ENCODE measurements at regions of chr1 and their contacts with region 1.

Region 1: GRCh38 chr1:53278201-53278725 is 39.9 kb upstream of the MAGOH start:
- DNase-seq: peak; percentile 40 to 82 (median 70)
- ATAC-seq: peak; percentile 74
- H3K4me3 ChIP-seq: no peak overlapping the region
- H3K4me3 Mint-ChIP-seq: no peak overlapping the region
- H3K27ac ChIP-seq: no peak overlapping the region
- H3K27ac Mint-ChIP-seq: no peak overlapping the region
- H3K4me1 ChIP-seq: no peaks in the 10 kb centered on the region
- H3K4me1 Mint-ChIP-seq: no peaks in the 10 kb centered on the region
- H3K27me3 ChIP-seq: no peaks in the 10 kb centered on the region
- H3K27me3 Mint-ChIP-seq: no peaks in the 10 kb centered on the region
- CTCF ChIP-seq: peak; percentile 97

Region 2: GRCh38 chr1:53214376-53214940 is 63.8 kb before region 1 on chr1:
- CTCF ChIA-PET with region 1: no interaction called
- POLR2A ChIA-PET with region 1: no interaction called
- intact Hi-C with region 1: no loop called
- DNase-seq: no peak
- ATAC-seq: no peak
- H3K4me3 ChIP-seq: no peak overlapping the region
- H3K4me3 Mint-ChIP-seq: no peak overlapping the region
- H3K27ac ChIP-seq: no peak overlapping the region
- H3K27ac Mint-ChIP-seq: no peak overlapping the region
- H3K4me1 ChIP-seq: peaks cover 3% of the 10 kb centered on the region
- H3K4me1 Mint-ChIP-seq: peaks cover 16% of the 10 kb centered on the region
- H3K27me3 ChIP-seq: no peaks in the 10 kb centered on the region
- H3K27me3 Mint-ChIP-seq: no peaks in the 10 kb centered on the region
- CTCF ChIP-seq: no peak

Region 3: DNA sequence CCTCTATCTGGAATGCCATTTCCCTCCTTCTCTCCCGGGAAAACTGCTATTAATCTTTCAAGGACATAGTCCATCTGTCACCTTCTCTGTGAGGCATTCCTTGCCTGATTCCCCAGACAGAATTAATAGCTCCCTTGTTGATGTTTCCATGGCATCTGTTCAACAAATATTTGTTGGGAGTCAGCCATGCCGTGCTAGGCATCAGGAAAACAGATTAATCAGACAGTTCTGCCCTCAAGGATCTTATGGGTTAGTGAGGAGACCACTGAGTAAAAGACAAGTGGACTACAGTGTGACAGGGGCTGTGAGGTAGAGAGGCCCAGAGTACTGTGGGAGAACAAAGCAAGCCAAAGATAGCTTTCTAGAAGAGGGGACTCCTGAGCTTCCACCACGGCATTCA is 28.6 kb before region 1 on chr1:
- CTCF ChIA-PET with region 1: no interaction called
- POLR2A ChIA-PET with region 1: no interaction called
- intact Hi-C with region 1: no loop called
- DNase-seq: no peak
- ATAC-seq: no peak
- H3K4me3 ChIP-seq: no peak overlapping the region
- H3K4me3 Mint-ChIP-seq: no peak overlapping the region
- H3K27ac ChIP-seq: no peak overlapping the region
- H3K27ac Mint-ChIP-seq: no peak overlapping the region
- H3K4me1 ChIP-seq: no peaks in the 10 kb centered on the region
- H3K4me1 Mint-ChIP-seq: no peaks in the 10 kb centered on the region
- H3K27me3 ChIP-seq: no peaks in the 10 kb centered on the region
- H3K27me3 Mint-ChIP-seq: no peaks in the 10 kb centered on the region
- CTCF ChIP-seq: no peak

Region 4: DNA sequence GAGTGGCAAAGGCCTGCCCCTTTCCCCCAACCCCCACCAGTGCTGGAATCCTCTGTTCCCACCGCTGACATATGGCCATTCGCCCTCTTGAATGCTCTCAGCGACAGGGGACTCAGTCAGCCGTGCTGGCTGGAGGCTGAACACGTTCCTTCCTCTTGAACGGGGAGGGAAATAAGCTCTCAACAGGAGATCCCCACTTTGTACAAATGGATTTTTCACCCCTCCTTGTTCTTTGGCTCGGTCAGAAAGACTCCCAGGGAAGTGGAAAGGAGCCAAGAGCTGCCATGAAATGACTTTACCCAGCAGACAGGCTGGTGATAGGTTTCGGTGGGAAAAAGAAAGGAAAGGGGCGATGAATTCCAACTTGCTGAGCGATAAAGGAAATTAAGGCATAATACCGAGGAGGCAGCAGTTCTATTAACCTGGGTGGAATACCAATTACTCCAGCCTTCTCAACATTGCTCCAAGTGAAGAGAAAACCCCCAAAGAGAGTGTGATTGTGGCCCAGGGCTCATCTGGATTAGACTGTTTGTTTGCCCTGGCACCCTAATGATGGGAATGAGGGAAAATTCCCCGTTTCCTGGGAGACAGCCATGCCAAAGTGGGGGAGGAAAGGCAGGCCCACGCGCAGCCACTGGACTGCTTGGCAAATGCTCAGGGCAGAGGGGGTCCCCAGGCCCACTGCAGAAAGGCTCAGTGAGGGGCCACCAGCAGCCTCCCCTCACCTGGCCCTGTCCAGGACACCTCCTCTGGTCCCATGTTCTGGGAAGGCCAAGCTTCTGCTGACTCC is 25.7 kb after region 1 on chr1:
- CTCF ChIA-PET with region 1: no interaction called
- POLR2A ChIA-PET with region 1: no interaction called
- intact Hi-C with region 1: no loop called
- DNase-seq: no peak
- ATAC-seq: no peak
- H3K4me3 ChIP-seq: no peak overlapping the region
- H3K4me3 Mint-ChIP-seq: no peak overlapping the region
- H3K27ac ChIP-seq: no peak overlapping the region
- H3K27ac Mint-ChIP-seq: no peak overlapping the region
- H3K4me1 ChIP-seq: no peaks in the 10 kb centered on the region
- H3K4me1 Mint-ChIP-seq: peaks cover 11% of the 10 kb centered on the region
- H3K27me3 ChIP-seq: no peaks in the 10 kb centered on the region
- H3K27me3 Mint-ChIP-seq: no peaks in the 10 kb centered on the region
- CTCF ChIP-seq: no peak

Region 5: GRCh38 chr1:53393325-53393792 is 115.1 kb after region 1 on chr1:
- CTCF ChIA-PET with region 1: interaction called, 41 read pairs
- POLR2A ChIA-PET with region 1: interaction called, 8 read pairs
- intact Hi-C with region 1: loop called (anchors 1 kb)
- DNase-seq: peak; percentile 41 to 85 (median 64)
- ATAC-seq: peak; percentile 62
- H3K4me3 ChIP-seq: no peak overlapping the region
- H3K4me3 Mint-ChIP-seq: no peak overlapping the region
- H3K27ac ChIP-seq: no peak overlapping the region
- H3K27ac Mint-ChIP-seq: no peak overlapping the region
- H3K4me1 ChIP-seq: peaks cover 5% of the 10 kb centered on the region
- H3K4me1 Mint-ChIP-seq: no peaks in the 10 kb centered on the region
- H3K27me3 ChIP-seq: no peaks in the 10 kb centered on the region
- H3K27me3 Mint-ChIP-seq: no peaks in the 10 kb centered on the region
- CTCF ChIP-seq: peak; percentile 87

Region 6: DNA sequence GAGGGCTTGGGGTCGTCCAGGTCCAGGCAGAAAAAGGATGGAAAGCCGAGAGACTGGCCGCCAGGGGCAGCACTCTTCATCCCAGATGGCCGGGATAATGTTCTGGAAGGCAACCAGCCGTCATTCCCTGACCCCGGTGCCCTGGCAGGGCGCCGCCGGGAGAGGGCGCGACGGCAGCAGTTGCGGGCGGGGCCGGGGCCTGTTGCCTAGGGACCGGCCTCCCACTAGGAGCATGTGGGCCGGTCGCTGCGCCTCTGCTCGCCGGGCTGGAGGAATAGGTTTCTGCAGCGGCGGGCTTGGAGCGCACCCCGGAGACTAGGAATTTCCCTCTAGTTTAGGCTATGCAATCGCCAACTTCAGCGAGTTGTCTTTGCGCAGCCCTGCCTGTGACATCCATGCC is 191.9 kb after region 1 on chr1:
- CTCF ChIA-PET with region 1: interaction called, 3 read pairs
- POLR2A ChIA-PET with region 1: no interaction called
- intact Hi-C with region 1: loop called (anchors 2 to 5 kb)
- DNase-seq: no peak
- ATAC-seq: no peak
- H3K4me3 ChIP-seq: no peak overlapping the region
- H3K4me3 Mint-ChIP-seq: no peak overlapping the region
- H3K27ac ChIP-seq: no peak overlapping the region
- H3K27ac Mint-ChIP-seq: no peak overlapping the region
- H3K4me1 ChIP-seq: no peaks in the 10 kb centered on the region
- H3K4me1 Mint-ChIP-seq: no peaks in the 10 kb centered on the region
- H3K27me3 ChIP-seq: no peaks in the 10 kb centered on the region
- H3K27me3 Mint-ChIP-seq: no peaks in the 10 kb centered on the region
- CTCF ChIP-seq: no peak

Region 7: DNA sequence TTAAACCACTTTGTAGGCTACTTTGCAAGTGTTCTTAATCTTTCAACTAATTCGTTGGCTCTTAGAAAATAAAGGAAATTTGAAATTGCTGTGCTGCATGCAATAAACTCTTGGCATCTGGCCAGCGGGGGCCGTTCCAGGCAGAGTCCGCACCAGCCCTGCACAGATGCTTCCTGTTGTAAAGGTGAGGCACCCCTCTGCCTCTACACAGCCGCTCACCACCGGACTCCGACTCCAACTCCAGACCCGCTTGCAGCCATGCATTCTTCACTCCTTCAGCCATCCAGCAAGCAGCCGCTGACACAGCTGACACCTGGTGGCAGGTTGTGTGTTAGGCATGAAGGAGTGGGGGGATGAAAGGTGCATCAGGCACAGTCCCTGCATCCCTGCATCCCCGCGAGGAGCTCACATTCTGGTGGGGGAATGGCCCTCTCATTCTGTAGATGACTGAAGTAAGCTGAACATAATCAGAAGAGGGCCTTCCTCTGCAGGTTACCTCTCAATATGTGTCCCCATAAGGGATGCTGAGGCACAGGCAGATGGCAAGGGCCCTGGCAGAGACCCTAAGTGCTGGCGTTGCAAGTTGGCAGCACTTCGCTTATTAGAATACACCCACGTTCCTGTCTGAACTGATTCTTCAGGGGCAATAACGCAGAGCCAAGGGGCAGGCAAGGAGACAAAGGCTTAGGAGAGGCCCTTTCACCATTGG is 403.9 kb after region 1 on chr1:
- CTCF ChIA-PET with region 1: interaction called, 3 read pairs
- POLR2A ChIA-PET with region 1: no interaction called
- intact Hi-C with region 1: loop called in 1 of 2 experiments (anchors 5 kb)
- DNase-seq: peak; percentile 10 to 57 (median 20)
- ATAC-seq: peak; percentile 57
- H3K4me3 ChIP-seq: no peak overlapping the region
- H3K4me3 Mint-ChIP-seq: peak overlapping the region; percentile 52
- H3K27ac ChIP-seq: no peak overlapping the region
- H3K27ac Mint-ChIP-seq: no peak overlapping the region
- H3K4me1 ChIP-seq: peaks cover 5% of the 10 kb centered on the region
- H3K4me1 Mint-ChIP-seq: peaks cover 9% of the 10 kb centered on the region
- H3K27me3 ChIP-seq: no peaks in the 10 kb centered on the region
- H3K27me3 Mint-ChIP-seq: peaks cover 18% of the 10 kb centered on the region
- CTCF ChIP-seq: peak; percentile 19

Region 8: GRCh38 chr1:53754484-53755312 is 476.4 kb after region 1 on chr1:
- CTCF ChIA-PET with region 1: no interaction called
- POLR2A ChIA-PET with region 1: no interaction called
- intact Hi-C with region 1: loop called (anchors 1 to 5 kb)
- DNase-seq: peak in 4 of 14 experiments; percentile 16 to 43 (median 32)
- ATAC-seq: no peak
- H3K4me3 ChIP-seq: no peak overlapping the region
- H3K4me3 Mint-ChIP-seq: no peak overlapping the region
- H3K27ac ChIP-seq: no peak overlapping the region
- H3K27ac Mint-ChIP-seq: no peak overlapping the region
- H3K4me1 ChIP-seq: no peaks in the 10 kb centered on the region
- H3K4me1 Mint-ChIP-seq: no peaks in the 10 kb centered on the region
- H3K27me3 ChIP-seq: no peaks in the 10 kb centered on the region
- H3K27me3 Mint-ChIP-seq: no peaks in the 10 kb centered on the region
- CTCF ChIP-seq: peak; percentile 59